HCT116 (cell line): ENCODE measurements at regions of chr2 and their contacts with region 1.

Region 1: DNA sequence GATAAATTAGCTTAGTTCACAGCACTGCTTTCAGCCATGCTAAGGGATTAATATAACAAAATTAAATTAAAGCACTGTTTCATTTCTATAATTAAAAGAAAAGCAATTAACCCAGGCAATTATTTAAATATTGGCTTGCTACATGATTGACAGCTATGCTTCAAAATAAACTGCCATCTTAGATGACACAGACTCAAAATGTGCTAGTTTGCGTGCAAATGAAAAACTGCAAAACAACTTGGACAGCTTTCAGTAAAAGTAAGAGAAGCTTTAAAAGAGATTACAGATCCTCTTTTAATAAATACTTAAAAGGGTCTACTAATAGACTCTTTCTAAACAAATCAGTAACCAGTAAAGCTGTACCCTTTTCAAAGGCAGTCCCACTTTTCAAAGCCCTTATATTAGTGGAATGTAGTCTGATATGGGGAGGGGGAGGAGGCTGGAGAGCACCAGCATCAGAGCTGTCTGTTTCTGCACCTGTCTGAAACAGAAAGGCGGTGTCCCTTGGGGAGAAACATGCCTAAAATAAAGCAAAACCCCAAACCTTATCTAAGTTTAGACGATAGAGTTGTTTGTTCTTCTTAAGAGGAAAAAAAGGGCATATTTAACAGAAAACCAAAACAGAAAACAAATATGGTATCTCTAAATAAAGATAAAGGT is 20.8 kb downstream of the EIF2AK3 start:
- DNase-seq: no peak
- ATAC-seq: no peak
- H3K4me3 ChIP-seq: no peak overlapping the region
- H3K27ac ChIP-seq: no peak overlapping the region
- H3K4me1 ChIP-seq: peaks cover 7 to 31% of the 10 kb centered on the region in 2 experiments; a peak in 3 of 4 replicates
- H3K27me3 ChIP-seq: no peaks in the 10 kb centered on the region
- CTCF ChIP-seq: no peak
- POLR2A ChIP-seq: no peak
- RAD21 ChIP-seq: no peak

Region 2: GRCh38 chr2:88627056-88627855 is 20.8 kb after region 1 on chr2 and contains the start of gene EIF2AK3:
- CTCF ChIA-PET with region 1: no interaction called
- POLR2A ChIA-PET with region 1: no interaction called
- RAD21 ChIA-PET with region 1: no interaction called
- intact Hi-C with region 1: loop called (anchors 1 kb)
- DNase-seq: peak; percentile 100
- ATAC-seq: peak; percentile 90
- H3K4me3 ChIP-seq: peak within 1 kb of the TSS; percentile 78
- H3K27ac ChIP-seq: peak within 1 kb of the TSS; percentile 85
- H3K4me1 ChIP-seq: peaks cover 11 to 20% of the 10 kb centered on the region in 2 experiments
- H3K27me3 ChIP-seq: no peaks in the 10 kb centered on the region
- CTCF ChIP-seq: no peak
- POLR2A ChIP-seq: no peak
- RAD21 ChIP-seq: no peak
- total RNA-seq, gene EIF2AK3: 8.9 TPM

Region 3: DNA sequence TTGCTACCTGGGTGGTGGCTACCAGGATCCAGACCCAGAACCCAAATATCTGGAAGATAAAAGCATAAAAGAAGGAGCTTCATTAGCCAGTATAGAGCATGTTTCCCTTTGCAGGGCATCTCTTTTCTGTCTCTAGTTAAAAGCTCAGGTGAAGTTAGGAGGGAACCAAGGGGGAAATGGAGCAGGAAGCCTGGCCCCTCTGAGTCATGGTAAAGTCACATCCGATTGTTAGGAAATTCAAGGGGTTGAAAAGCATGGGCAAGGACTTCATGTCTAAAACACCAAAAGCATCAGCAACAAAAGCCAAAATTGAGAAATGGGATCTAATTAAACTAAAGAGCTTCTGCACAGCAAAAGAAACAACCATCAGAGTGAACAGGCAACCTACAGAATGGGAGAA is 211.9 kb after region 1 on chr2:
- CTCF ChIA-PET with region 1: no interaction called
- POLR2A ChIA-PET with region 1: no interaction called
- RAD21 ChIA-PET with region 1: no interaction called
- intact Hi-C with region 1: no loop called
- DNase-seq: no peak
- ATAC-seq: no peak
- H3K4me3 ChIP-seq: no peak overlapping the region
- H3K27ac ChIP-seq: no peak overlapping the region
- H3K4me1 ChIP-seq: no peaks in the 10 kb centered on the region
- H3K27me3 ChIP-seq: no peaks in the 10 kb centered on the region; the same call in 1 of the 2 replicates
- CTCF ChIP-seq: no peak
- POLR2A ChIP-seq: no peak
- RAD21 ChIP-seq: no peak